ENCODE measurements at regions of chr11 and their contacts with region 1.

Region 1: GRCh38 chr11:75241036-75241905 is 697 bp downstream of the TPBGL start:
- DNase-seq: peak; percentile 88 to 99
- H3K4me3 ChIP-seq: peak overlapping the region; percentile 47
- H3K4me3 Mint-ChIP-seq: peak overlapping the region; percentile 62
- H3K27ac Mint-ChIP-seq: no peak overlapping the region
- H3K4me1 ChIP-seq: peaks cover 10% of the 10 kb centered on the region; the same call in 1 of the 2 replicates
- H3K4me1 Mint-ChIP-seq: no peaks in the 10 kb centered on the region
- H3K27me3 ChIP-seq: peaks cover 6% of the 10 kb centered on the region
- H3K27me3 Mint-ChIP-seq: peaks cover 30% of the 10 kb centered on the region
- CTCF ChIP-seq: peak; percentile 67 to 99

Region 2: DNA sequence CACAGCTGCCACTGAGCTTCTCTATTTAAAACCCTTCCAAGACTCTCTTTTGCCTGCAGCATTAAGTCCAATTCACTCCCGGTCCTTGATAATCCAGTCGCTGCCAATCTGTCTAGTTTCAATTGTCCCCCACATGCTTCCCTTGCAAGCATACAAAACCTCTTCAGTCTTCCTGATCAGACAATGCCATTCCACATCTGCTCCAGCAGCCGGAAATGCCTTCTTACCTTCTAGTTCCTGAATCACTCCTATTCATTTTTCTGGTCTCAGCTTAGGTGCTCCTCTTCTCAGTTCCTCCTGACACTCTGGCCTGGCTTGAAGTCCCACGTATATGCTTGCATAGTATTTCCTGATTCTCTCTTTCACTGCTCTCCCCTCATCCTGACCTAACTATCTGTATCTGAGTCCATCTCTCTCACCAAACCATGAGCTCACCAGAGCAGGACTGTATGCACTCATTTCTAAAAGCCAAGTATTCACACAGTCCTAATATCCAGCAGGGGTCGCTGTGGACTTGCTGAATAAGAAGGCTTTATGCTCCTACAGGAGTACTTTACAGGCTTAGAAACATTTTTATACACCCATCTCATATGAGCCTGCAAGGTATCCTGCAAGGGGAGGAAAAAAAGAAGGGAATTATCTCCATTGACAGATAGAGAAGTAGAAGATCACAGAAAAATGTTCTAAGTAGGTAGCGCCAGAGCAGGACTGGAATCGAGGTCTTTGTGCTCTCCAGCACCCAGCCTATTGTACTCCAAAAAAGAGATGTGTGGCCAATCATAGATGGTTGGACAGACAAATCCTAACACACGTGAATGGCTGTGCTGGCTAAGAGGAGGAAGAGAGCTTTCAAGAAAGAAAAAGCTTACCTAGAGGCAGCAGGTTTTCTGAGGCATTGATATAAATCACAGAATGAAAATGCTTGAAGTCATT is 311.6 kb before region 1 on chr11:
- CTCF ChIA-PET with region 1: interaction called, 14 read pairs
- POLR2A ChIA-PET with region 1: no interaction called
- intact Hi-C with region 1: no loop called
- DNase-seq: peak; percentile 84
- H3K4me3 ChIP-seq: no peak overlapping the region
- H3K4me3 Mint-ChIP-seq: no peak overlapping the region
- H3K27ac Mint-ChIP-seq: no peak overlapping the region
- H3K4me1 ChIP-seq: 0 out of 2 replicates have a peak, but pooled peaks cover 6% of the 10 kb centered on the region
- H3K4me1 Mint-ChIP-seq: no peaks in the 10 kb centered on the region
- H3K27me3 ChIP-seq: no peaks in the 10 kb centered on the region
- H3K27me3 Mint-ChIP-seq: no peaks in the 10 kb centered on the region
- CTCF ChIP-seq: peak; percentile 96

Region 3: DNA sequence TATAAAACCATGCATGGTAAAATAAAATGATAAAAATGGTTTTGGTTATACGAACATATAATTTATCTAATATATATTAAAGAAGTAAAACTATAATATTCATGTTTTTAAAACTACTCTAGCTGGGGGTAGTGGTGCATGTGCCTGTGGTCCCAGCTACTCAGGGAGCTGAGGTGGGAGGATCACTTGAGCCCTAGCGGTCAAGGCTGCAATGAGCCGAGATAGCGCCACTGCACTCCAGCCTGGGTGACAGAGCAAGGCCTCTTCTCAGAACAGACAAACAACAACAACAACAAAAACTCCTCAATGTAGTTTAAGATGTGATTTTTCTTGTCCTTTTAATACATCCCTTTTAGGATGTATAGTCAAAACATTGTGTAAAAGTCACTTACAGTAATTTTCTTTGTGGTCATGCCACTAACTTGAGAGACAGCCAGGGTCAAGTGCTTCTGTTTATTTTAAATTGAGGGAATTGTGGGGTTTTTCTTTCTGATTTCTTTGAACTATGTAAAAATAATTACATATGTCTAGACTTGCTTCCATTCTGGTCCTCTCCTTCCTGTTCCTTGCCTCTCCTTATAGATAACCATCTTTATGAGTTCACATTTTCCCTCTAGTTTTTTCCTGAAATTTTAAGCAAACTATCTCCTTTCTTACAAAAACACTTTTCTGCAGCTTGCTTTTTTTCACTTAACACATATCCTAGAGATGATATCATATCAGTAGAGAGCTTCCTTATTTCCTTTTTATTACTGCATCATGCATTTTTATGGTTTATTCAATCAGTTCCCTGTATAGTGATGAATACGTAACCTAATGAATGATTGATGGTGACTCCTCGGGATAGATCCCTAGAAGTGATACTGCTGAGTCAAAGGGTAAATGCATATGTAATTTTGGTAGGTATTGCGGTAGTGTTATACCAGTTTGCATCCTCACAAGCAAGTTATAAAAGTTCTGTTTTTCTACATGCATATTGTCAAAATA is 153.7 kb before region 1 on chr11:
- CTCF ChIA-PET with region 1: no interaction called
- POLR2A ChIA-PET with region 1: no interaction called
- intact Hi-C with region 1: no loop called
- DNase-seq: no peak
- H3K4me3 ChIP-seq: no peak overlapping the region
- H3K4me3 Mint-ChIP-seq: no peak overlapping the region
- H3K27ac Mint-ChIP-seq: no peak overlapping the region
- H3K4me1 ChIP-seq: no peaks in the 10 kb centered on the region
- H3K4me1 Mint-ChIP-seq: no peaks in the 10 kb centered on the region
- H3K27me3 ChIP-seq: 0 out of 2 replicates have a peak, but pooled peaks cover 1% of the 10 kb centered on the region
- H3K27me3 Mint-ChIP-seq: peaks cover 23% of the 10 kb centered on the region
- CTCF ChIP-seq: no peak

Region 4: DNA sequence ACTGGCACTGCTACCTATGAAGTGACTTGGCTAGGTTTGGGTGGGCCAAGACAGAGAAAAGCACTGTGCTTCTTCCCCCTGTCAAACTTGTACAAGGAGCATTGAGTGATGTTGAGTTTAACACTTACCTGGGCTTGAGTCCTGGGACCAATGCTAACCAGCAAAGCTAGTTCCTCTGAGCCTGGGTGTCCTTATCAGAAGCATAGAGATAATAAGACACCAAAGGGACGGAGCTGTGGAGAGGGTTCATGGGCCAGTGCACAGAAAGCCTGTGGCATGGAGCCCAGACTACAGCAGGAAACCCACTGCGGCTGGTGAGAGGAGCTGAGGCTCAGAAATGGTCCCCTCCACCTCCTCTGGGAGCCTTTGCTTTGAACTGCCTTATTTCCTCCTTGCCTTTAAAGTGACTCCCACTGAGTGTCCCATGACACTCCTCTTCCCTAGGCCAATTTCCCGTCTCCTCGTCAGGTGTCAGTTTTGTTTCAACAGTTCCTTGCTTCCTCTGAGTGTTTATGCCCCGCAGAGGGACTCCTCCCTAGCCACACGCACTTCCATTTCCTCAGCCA is 81.0 kb before region 1 on chr11:
- CTCF ChIA-PET with region 1: interaction called, 18 read pairs
- POLR2A ChIA-PET with region 1: no interaction called
- intact Hi-C with region 1: no loop called
- DNase-seq: peak; percentile 61 to 75
- H3K4me3 ChIP-seq: peak overlapping the region; percentile 39
- H3K4me3 Mint-ChIP-seq: peak overlapping the region; percentile 84
- H3K27ac Mint-ChIP-seq: peak overlapping the region; percentile 97
- H3K4me1 ChIP-seq: peaks cover 98% of the 10 kb centered on the region
- H3K4me1 Mint-ChIP-seq: peaks cover 74% of the 10 kb centered on the region
- H3K27me3 ChIP-seq: no peaks in the 10 kb centered on the region
- H3K27me3 Mint-ChIP-seq: no peaks in the 10 kb centered on the region
- CTCF ChIP-seq: no peak

Region 5: DNA sequence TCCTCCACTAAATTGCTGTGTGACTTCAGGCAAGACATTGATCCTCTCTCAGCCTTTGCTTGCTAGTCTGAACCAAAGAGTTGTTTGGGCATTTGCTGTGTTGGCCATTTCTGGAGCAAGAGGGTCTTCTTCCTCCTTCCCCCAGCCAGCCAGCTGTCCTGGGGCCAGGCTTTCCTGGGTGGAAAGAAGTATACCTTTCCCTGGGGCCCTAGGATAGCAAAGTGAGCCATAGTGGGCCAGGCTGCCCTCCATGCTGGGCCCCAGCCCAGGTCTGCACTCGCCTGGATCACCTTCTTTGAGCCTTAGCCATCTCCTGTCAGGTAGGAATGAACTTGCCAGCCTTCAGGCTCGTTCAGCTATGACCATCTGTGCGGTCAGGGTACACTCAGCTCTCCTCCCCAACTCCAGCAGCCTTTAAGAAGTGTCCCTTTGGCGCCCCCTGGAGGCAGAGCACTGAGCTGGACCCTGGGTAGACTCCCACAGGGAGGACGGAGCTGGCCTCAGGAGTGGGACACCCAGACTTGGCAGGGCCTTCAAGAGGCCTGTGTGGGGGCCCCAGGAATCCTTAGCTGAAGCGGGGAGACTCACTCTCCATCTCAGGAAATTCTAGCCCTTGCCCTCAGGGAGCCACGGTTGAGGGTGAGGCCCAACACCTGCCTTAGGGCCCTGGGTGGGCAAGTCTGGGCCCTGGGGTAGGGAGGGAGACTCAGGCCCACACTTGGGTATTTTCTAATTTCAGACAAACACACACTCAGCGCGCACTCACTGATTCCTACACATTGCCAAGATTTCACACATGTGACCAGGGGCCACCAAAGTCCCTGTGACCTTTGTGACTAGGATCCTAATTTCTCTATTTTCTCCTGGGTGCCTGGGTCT is 36.3 kb before region 1 on chr11:
- CTCF ChIA-PET with region 1: interaction called, 44 read pairs
- POLR2A ChIA-PET with region 1: no interaction called
- intact Hi-C with region 1: loop called (anchors 2 kb)
- DNase-seq: peak; percentile 95 to 97
- H3K4me3 ChIP-seq: no peak overlapping the region
- H3K4me3 Mint-ChIP-seq: no peak overlapping the region
- H3K27ac Mint-ChIP-seq: no peak overlapping the region
- H3K4me1 ChIP-seq: peaks cover 26% of the 10 kb centered on the region
- H3K4me1 Mint-ChIP-seq: peaks cover 16% of the 10 kb centered on the region
- H3K27me3 ChIP-seq: no peaks in the 10 kb centered on the region
- H3K27me3 Mint-ChIP-seq: no peaks in the 10 kb centered on the region
- CTCF ChIP-seq: peak; percentile 98 to 99

Region 6: DNA sequence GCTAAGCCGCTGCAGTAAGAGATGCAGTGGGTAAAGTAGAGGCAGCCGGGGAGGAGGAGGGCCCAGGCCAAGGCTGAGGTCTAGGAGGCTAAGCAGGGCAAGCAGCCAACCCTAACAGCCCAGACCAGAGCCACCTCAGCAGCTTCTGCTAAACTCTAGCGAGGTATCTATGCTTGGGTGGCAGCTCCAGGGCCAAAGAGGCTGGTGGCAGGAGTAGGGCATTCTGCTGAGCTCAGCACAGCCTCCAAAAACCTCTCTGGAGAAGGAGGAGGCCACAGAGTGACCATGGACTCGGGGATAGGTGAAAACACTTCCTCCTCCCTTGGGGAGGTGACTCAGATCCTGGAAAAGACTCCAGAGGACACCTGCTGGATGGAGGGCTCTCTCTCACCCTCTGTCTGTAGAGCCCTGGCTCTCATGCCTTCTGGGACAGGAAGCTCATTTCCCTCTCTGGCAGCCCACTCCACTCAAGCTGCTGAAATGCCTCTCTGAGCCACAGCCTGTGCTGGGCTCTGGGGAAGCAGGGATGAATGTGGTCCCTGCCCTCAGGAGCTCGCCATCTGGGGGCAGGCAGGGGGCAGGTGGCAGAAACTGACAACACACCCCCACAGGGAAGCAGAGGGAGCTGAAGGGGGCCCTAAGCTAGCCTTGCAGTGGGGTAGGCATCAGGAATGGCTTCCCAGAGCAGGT is 17.2 kb before region 1 on chr11:
- CTCF ChIA-PET with region 1: interaction called, 13 read pairs
- POLR2A ChIA-PET with region 1: no interaction called
- intact Hi-C with region 1: no loop called
- DNase-seq: peak in 1 of 2 experiments; percentile 55
- H3K4me3 ChIP-seq: no peak overlapping the region
- H3K4me3 Mint-ChIP-seq: no peak overlapping the region
- H3K27ac Mint-ChIP-seq: no peak overlapping the region
- H3K4me1 ChIP-seq: no peaks in the 10 kb centered on the region
- H3K4me1 Mint-ChIP-seq: no peaks in the 10 kb centered on the region
- H3K27me3 ChIP-seq: no peaks in the 10 kb centered on the region
- H3K27me3 Mint-ChIP-seq: no peaks in the 10 kb centered on the region
- CTCF ChIP-seq: peak; percentile 30 to 54